ENCODE measurements at regions of chr11 and their contacts with region 1.

Region 1: DNA sequence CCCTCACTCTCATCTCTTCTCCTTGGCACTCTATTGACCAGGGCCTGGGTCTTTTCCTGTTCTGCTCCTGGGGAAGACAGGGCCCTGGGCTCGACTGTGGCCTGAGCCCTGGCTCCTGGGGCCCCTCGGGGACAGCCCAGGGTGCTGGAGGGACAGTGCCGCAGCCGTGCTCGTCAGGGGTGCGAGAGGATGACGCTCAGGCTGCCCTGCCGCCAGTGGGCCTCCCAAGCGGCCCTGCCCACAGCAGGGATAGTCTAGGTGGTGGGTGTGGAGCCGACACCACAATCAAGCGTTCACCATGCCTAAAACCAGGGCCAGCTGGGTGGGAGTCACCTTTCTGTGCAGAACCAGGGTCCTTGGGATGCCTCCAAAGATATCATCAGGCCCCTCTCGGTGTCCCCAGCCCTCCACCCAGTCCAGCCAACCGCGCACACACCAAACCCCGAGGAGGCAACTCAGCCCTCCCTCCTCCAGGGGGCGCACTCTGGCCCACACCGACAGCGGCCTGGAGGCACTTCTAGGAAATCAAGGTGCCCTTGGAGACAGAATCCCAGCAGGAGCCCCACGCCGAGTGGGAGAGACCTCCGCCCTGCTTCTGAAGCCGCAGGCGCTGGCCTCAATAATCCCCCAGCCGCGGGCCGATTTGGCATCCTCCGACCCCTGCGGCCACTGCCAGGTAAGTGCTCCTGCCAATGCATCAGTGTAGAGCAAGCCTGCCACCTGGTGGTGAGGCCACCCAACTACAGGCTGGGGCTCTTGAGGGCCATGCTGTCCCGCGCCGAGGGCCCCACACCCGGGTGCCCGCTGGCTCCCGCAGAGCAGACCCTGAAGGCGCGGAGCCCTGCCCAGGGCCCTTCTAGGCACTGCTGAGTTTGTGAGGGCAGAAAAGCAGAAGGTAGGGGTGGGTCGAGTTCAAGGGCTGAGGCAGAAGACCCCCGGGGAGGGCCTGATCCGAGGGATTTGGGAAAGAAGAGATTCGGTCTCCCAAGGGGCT is 496.4 kb downstream of the BUD13 start:
- DNase-seq: peak; percentile 95 to 97
- H3K4me3 ChIP-seq: peak overlapping the region; percentile 29
- H3K4me3 Mint-ChIP-seq: peak overlapping the region; percentile 64
- H3K27ac Mint-ChIP-seq: peak overlapping the region; percentile 27
- H3K4me1 ChIP-seq: peaks cover 23% of the 10 kb centered on the region
- H3K4me1 Mint-ChIP-seq: peaks cover 18% of the 10 kb centered on the region
- H3K27me3 ChIP-seq: no peaks in the 10 kb centered on the region
- H3K27me3 Mint-ChIP-seq: no peaks in the 10 kb centered on the region
- CTCF ChIP-seq: peak; percentile 91 to 100

Region 2: GRCh38 chr11:114774599-114775361 is 1501.6 kb before region 1 on chr11:
- CTCF ChIA-PET with region 1: no interaction called
- POLR2A ChIA-PET with region 1: no interaction called
- intact Hi-C with region 1: loop called (anchors 10 kb)
- DNase-seq: peak; percentile 77 to 81
- H3K4me3 ChIP-seq: no peak overlapping the region
- H3K4me3 Mint-ChIP-seq: no peak overlapping the region
- H3K27ac Mint-ChIP-seq: no peak overlapping the region
- H3K4me1 ChIP-seq: 0 out of 2 replicates have a peak, but pooled peaks cover 6% of the 10 kb centered on the region
- H3K4me1 Mint-ChIP-seq: peaks cover 16% of the 10 kb centered on the region
- H3K27me3 ChIP-seq: no peaks in the 10 kb centered on the region
- H3K27me3 Mint-ChIP-seq: no peaks in the 10 kb centered on the region
- CTCF ChIP-seq: peak; percentile 94 to 95

Region 3: DNA sequence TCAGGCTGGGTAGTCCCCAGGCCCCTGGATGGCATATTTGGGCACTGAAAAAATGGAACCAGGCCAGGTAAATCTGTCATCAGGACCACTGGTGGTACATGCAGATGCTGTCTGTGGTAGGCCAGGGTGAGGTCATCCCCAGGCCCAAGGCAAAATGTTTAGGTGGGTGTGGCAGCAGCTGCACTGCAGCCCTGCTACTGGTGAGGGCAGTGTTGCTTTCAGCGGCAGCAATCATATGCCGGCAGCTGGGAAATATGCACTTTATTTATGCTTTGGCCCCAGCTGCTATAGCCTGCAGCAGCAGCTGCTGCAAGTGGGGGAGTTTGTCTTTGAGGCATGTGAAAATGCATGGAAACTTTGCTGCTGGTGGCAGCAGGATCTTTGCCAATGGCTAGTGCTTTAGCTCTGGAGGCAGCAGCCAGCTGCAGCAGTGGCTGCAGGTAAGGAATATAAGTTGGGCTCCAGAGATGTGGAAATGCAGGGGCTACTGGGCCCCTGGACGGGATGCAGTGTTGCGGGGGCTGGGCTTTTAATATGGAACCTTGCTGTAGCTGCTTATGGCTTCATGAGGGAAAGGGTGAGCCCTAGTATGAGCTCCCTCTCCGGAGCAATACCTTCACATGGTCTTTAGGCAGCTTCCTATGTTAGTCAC is 406.4 kb before region 1 on chr11:
- CTCF ChIA-PET with region 1: no interaction called
- POLR2A ChIA-PET with region 1: no interaction called
- intact Hi-C with region 1: loop called (anchors 1 kb)
- DNase-seq: peak; percentile 64 to 74
- H3K4me3 ChIP-seq: no peak overlapping the region
- H3K4me3 Mint-ChIP-seq: no peak overlapping the region
- H3K27ac Mint-ChIP-seq: no peak overlapping the region
- H3K4me1 ChIP-seq: no peaks in the 10 kb centered on the region
- H3K4me1 Mint-ChIP-seq: no peaks in the 10 kb centered on the region
- H3K27me3 ChIP-seq: peaks cover 2% of the 10 kb centered on the region; the same call in 1 of the 2 replicates
- H3K27me3 Mint-ChIP-seq: peaks cover 21% of the 10 kb centered on the region
- CTCF ChIP-seq: peak; percentile 84 to 86

Region 4: DNA sequence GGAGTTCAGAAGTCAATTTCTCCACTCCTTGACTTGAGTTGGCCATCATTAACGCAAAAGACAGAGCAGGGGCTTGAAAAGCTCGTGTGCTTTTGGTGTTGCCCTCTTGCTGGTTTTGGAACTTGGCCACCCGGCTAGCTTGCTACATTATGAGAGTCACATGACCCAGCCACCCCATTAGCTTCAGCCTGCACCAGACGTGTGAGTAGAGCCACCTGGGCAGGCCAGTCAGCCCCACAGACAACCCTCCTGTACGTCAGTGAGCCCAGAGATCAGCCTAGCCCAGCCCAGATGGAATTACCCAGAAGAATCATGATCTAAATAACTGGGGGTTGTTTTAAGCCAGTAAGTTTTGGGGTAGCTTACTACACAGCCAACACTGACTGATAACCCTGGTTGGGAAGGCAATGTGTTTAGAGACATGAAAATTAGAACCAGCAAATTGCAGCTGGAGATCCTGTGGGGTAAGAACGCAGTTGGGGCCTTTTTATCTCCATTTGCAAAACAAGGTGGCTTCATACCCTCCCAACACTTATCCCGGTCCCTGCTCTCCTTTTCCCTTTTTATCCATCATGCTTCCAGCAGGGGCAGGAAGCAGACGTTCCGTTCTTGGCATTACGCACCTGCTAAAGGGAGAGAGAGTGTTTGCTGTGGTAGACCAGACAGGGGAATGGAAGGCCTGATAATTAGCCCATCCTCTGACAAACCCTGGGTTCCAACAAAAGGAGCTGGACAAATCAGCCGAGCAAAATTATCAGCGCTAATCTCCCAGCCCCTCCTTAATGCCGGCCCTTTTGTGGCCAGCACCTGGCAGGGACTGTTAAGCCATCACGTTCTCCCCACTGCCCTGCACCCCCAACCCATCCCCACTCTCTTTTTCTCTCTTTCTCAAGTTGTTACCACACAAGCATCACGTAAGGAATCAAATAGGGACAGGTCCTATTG is 223.5 kb before region 1 on chr11:
- CTCF ChIA-PET with region 1: no interaction called
- POLR2A ChIA-PET with region 1: no interaction called
- intact Hi-C with region 1: loop called (anchors 10 kb)
- DNase-seq: no peak
- H3K4me3 ChIP-seq: no peak overlapping the region
- H3K4me3 Mint-ChIP-seq: no peak overlapping the region
- H3K27ac Mint-ChIP-seq: no peak overlapping the region
- H3K4me1 ChIP-seq: no peaks in the 10 kb centered on the region
- H3K4me1 Mint-ChIP-seq: no peaks in the 10 kb centered on the region
- H3K27me3 ChIP-seq: peaks cover 3% of the 10 kb centered on the region; the same call in 1 of the 2 replicates
- H3K27me3 Mint-ChIP-seq: peaks cover 32% of the 10 kb centered on the region
- CTCF ChIP-seq: no peak

Region 5: DNA sequence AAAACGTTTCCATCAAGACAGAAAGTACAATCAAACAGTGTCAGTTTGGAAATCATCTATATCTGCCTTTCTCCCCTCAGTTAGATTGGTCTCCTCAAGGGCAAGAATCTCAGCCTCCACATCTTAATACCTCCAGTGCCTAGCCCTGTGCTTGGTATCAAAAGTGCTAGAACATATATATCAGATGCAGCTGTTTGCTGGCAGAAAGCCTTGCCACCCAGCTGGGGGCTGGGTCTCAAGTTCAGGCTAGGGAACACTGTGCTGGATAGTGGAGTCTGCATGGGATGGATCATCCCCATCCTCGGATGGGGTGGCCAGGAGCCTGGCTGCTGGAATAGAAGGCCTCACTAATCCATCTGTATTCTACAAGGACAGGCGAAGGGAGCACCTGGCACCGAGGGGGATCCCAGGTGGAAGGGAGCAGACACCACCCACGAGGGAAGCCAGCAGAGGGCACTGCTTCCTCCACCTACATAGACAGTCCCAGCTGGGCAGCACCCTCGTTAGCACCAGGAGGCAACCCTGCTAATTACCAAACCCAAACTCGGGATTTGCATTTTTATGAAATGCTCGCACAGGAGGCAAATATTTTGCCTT is 105.7 kb before region 1 on chr11:
- CTCF ChIA-PET with region 1: no interaction called
- POLR2A ChIA-PET with region 1: no interaction called
- intact Hi-C with region 1: loop called (anchors 2 kb)
- DNase-seq: peak in 1 of 2 experiments; percentile 66
- H3K4me3 ChIP-seq: no peak overlapping the region
- H3K4me3 Mint-ChIP-seq: no peak overlapping the region
- H3K27ac Mint-ChIP-seq: no peak overlapping the region
- H3K4me1 ChIP-seq: peaks cover 12% of the 10 kb centered on the region
- H3K4me1 Mint-ChIP-seq: peaks cover 27% of the 10 kb centered on the region
- H3K27me3 ChIP-seq: no peaks in the 10 kb centered on the region
- H3K27me3 Mint-ChIP-seq: no peaks in the 10 kb centered on the region
- CTCF ChIP-seq: peak; percentile 56 to 82

Region 6: GRCh38 chr11:116294631-116295030 is 18.3 kb after region 1 on chr11:
- CTCF ChIA-PET with region 1: interaction called, 15 read pairs
- POLR2A ChIA-PET with region 1: no interaction called
- intact Hi-C with region 1: loop called (anchors 2 kb)
- DNase-seq: peak; percentile 88 to 92
- H3K4me3 ChIP-seq: no peak overlapping the region
- H3K4me3 Mint-ChIP-seq: peak overlapping the region; percentile 70
- H3K27ac Mint-ChIP-seq: peak overlapping the region; percentile 96
- H3K4me1 ChIP-seq: peaks cover 49% of the 10 kb centered on the region
- H3K4me1 Mint-ChIP-seq: peaks cover 43% of the 10 kb centered on the region
- H3K27me3 ChIP-seq: no peaks in the 10 kb centered on the region
- H3K27me3 Mint-ChIP-seq: no peaks in the 10 kb centered on the region
- CTCF ChIP-seq: no peak

Region 7: DNA sequence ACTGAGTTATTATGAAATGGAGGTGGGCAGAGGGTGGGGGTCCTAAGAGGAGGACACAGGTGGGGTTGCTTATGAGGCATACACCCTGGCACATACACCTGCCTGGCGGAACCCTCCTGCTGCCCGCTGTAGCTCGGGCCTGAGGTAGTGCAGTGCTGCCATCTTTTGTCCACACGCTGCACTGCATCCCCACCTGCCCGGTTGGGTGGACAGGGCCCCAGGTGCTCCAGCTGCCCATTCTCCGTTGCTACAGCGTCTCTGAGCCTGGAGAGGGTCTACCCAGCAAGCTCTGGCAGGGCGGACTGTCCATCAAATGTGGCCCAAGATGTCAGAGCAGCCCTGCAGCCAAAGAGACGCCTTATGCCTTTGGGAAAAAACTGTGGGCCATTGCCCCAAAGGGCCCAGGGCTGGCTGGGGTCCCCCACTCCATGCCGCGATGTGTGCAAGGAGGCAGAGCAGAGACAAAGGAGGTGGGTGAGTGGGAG is 365.3 kb after region 1 on chr11:
- CTCF ChIA-PET with region 1: interaction called, 8 read pairs
- POLR2A ChIA-PET with region 1: no interaction called
- intact Hi-C with region 1: loop called (anchors 5 kb)
- DNase-seq: peak; percentile 77 to 88
- H3K4me3 ChIP-seq: no peak overlapping the region
- H3K4me3 Mint-ChIP-seq: no peak overlapping the region
- H3K27ac Mint-ChIP-seq: no peak overlapping the region
- H3K4me1 ChIP-seq: no peaks in the 10 kb centered on the region
- H3K4me1 Mint-ChIP-seq: no peaks in the 10 kb centered on the region
- H3K27me3 ChIP-seq: no peaks in the 10 kb centered on the region
- H3K27me3 Mint-ChIP-seq: peaks cover 6% of the 10 kb centered on the region
- CTCF ChIP-seq: peak; percentile 97 to 98

Measured in Caco-2 (cell line).